ENCODE measurements at regions of chr10 and their contacts with region 1.

Region 1: DNA sequence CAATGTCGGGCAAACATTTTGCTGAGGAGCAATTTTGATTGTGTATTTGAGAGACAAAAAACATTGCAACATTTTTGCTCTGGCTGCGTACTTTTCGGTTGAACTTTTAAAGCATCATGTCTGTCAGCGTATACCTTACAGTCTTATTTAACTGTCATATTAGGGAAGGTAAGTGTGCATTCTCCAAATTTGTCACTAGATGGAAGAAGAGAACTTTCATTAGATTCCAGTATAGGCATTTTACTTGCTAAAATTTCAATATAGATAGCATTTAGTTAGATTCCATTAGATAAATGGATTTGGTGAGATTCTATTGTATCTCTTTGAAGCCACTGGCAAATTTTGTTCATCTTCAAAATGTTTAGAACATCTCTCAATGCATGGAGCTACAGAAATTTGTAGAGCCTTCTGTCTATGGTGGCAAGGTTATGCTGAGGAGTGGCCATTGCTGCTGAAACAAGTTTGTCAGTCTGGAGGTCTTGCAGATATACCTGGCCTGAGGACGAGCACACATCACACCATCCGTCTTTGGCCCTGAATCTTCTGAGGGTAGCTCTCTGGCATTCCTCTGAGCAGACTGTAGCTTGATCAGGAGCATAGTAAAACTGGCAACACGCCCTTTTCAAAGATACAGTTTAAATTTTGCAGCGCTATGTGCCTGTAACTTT is 437.5 kb upstream of the MBL2 start:
- DNase-seq: no peak
- H3K4me3 ChIP-seq: no peak overlapping the region
- H3K27ac ChIP-seq: no peak overlapping the region
- H3K4me1 ChIP-seq: no peaks in the 10 kb centered on the region
- H3K27me3 ChIP-seq: no peaks in the 10 kb centered on the region
- CTCF ChIP-seq: peak in 2 of 3 donors; percentile 27 to 37
- POLR2A ChIP-seq: no peak

Region 2: GRCh38 chr10:52836816-52837215 is 373.3 kb before region 1 on chr10:
- intact Hi-C with region 1: loop called (anchors 5 kb)
- DNase-seq: no peak
- H3K4me3 ChIP-seq: no peak overlapping the region
- H3K27ac ChIP-seq: no peak overlapping the region
- H3K4me1 ChIP-seq: no peaks in the 10 kb centered on the region
- H3K27me3 ChIP-seq: no peaks in the 10 kb centered on the region
- CTCF ChIP-seq: no peak
- POLR2A ChIP-seq: no peak

Region 3: DNA sequence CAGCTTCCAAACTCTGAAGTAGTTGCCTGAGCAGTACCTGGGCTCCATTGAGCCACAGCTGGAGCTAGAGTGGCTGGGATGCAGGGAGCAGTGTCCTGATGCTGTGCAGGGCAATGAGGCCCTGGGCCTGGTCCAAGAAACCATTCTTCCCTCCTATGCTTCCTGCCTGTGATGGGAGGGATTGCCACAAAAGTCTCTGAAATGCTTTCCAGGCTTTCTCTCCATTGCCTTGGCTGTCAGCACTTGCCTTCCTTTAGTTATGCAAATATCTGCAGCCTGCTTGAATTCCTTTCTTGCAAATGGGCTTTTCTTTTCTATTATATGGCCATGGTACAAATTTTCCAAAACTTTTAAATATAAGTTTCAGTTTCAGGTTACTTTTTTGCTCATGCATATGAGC is 534.7 kb after region 1 on chr10:
- intact Hi-C with region 1: no loop called
- DNase-seq: no peak
- H3K4me3 ChIP-seq: no peak overlapping the region
- H3K27ac ChIP-seq: no peak overlapping the region
- H3K4me1 ChIP-seq: no peaks in the 10 kb centered on the region
- H3K27me3 ChIP-seq: no peaks in the 10 kb centered on the region
- CTCF ChIP-seq: no peak
- POLR2A ChIP-seq: no peak

Region 4: GRCh38 chr10:54063514-54063913 is 853.4 kb after region 1 on chr10:
- intact Hi-C with region 1: no loop called
- DNase-seq: no peak
- H3K4me3 ChIP-seq: no peak overlapping the region
- H3K27ac ChIP-seq: no peak overlapping the region
- H3K4me1 ChIP-seq: no peaks in the 10 kb centered on the region
- H3K27me3 ChIP-seq: no peaks in the 10 kb centered on the region
- CTCF ChIP-seq: no peak
- POLR2A ChIP-seq: no peak

Region 5: GRCh38 chr10:54869022-54869421 is 1658.9 kb after region 1 on chr10:
- intact Hi-C with region 1: no loop called
- DNase-seq: no peak
- H3K4me3 ChIP-seq: no peak overlapping the region
- H3K27ac ChIP-seq: no peak overlapping the region
- H3K4me1 ChIP-seq: no peaks in the 10 kb centered on the region
- H3K27me3 ChIP-seq: no peaks in the 10 kb centered on the region
- CTCF ChIP-seq: no peak
- POLR2A ChIP-seq: no peak

Measured in breast epithelium (tissue), 4 donors.